Aorta (tissue), 5 donors: ENCODE measurements at regions of chr9 and their contacts with region 1.

Region 1: DNA sequence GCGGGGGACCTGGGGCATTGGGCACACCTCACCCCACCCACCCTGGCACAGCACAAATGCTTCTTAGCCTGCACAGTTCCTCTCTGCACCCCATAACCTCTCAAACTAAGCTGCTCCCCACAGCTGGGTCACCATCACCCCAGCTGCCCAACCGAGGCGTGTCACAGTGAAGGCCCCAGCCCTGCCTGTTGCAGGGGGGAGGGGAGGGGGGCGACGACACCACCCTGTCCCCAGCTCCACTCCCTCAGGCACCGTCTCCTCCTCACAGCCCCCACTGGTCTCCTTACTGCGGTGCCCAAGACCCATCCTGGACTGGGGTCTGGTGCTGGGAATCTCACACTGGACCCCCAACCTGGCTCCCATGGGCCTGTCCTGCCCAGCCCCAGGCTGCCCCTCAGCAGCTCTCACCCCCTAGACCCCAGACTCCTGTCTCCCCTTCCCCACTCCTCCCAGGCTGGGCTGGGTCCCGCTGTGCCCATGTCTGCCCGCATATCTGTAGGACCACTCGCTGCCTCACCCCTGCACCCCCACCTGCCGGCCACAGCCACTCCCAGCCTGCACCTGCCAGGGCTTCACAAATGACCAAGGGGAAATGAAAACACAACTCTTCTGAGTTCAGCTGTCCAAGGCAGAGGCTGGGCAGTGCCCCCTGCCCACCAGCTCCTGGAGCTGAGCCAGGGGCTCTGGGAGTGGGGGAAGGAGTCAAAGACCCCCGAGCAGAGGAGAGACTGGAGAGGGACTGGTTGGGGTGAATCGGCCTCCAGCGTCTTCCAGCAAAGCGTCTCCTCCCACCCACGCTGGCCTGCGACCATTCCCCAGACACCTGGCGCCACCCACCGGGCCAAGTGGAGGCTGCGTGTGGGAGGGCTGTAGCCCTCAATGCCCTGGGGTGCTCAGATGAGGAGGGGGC is 32.7 kb upstream of the EGFL7 start:
- DNase-seq: peak in 1 of 2 donors; percentile 71
- ATAC-seq: peak; percentile 53
- H3K4me3 ChIP-seq: no peak overlapping the region
- H3K27ac ChIP-seq: no peak overlapping the region
- H3K4me1 ChIP-seq: no peaks in the 10 kb centered on the region
- H3K27me3 ChIP-seq: no peaks in the 10 kb centered on the region

Region 2: GRCh38 chr9:136385015-136385414 is 245.0 kb before region 1 on chr9:
- intact Hi-C with region 1: no loop called
- DNase-seq: no peak
- ATAC-seq: no peak
- H3K4me3 ChIP-seq: no peak overlapping the region
- H3K27ac ChIP-seq: no peak overlapping the region
- H3K4me1 ChIP-seq: no peaks in the 10 kb centered on the region
- H3K27me3 ChIP-seq: no peaks in the 10 kb centered on the region

Region 3: GRCh38 chr9:136539427-136540421 is 90.3 kb before region 1 on chr9:
- intact Hi-C with region 1: loop called in 1 of 2 experiments (anchors 5 kb)
- DNase-seq: peak; percentile 92 to 95
- ATAC-seq: peak; percentile 75
- H3K4me3 ChIP-seq: no peak overlapping the region
- H3K27ac ChIP-seq: no peak overlapping the region
- H3K4me1 ChIP-seq: no peaks in the 10 kb centered on the region
- H3K27me3 ChIP-seq: no peaks in the 10 kb centered on the region